ENCODE measurements at regions of chr11 and their contacts with region 1.

Region 1: GRCh38 chr11:95556342-95557163 is 233.0 kb downstream of the FAM76B start:
- DNase-seq: peak; percentile 56
- H3K4me3 Mint-ChIP-seq: peak overlapping the region; percentile 38
- H3K27ac Mint-ChIP-seq: peak overlapping the region; percentile 90
- H3K4me1 Mint-ChIP-seq: peaks cover 27% of the 10 kb centered on the region
- H3K27me3 Mint-ChIP-seq: no peaks in the 10 kb centered on the region

Region 2: DNA sequence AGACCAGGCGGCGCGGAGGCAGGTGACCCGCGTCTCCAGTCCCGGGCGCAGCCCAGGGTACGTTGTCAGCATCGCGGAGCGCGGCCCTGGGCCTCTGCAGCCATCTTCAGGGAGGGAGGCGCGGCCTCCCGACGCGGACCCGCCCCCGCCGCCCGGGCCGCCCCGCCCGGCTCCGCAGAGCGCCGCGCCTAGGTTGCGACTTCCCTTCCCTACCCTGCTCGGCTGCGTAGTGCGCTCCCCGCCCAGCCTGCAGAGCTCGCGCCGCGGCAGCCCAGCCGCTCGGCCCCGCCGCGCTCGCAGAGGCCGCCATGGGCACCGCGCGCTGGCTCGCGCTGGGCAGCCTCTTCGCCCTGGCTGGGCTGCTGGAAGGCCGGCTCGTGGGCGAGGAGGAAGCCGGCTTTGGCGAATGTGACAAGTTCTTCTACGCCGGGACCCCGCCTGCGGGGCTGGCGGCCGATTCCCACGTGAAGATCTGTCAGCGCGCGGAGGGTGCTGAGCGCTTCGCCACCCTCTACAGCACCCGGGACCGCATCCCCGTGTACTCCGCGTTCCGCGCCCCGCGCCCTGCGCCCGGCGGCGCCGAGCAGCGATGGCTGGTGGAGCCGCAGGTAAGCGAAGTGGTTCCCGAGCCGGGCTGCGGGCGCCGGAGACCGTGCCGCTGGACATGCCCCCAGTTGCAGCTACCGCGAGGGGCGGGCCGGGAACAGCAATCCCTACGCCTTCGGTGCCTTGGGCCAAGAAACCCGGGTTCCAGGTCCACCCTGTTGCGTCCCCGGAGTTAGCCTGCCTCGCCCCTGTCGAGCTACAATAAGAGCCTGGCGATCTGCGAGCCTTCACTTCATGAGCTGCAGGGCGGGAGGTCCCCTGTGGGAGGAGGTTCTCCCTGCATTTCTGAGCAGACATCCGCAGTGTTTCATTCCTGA is 466.7 kb before region 1 on chr11 and contains the start of gene ENDOD1:
- CTCF ChIA-PET with region 1: no interaction called
- POLR2A ChIA-PET with region 1: no interaction called
- intact Hi-C with region 1: loop called (anchors 5 kb)
- DNase-seq: peak; percentile 90
- H3K4me3 Mint-ChIP-seq: peak within 1 kb of the TSS; percentile 87
- H3K27ac Mint-ChIP-seq: peak within 1 kb of the TSS; percentile 92
- H3K4me1 Mint-ChIP-seq: peaks cover 68% of the 10 kb centered on the region
- H3K27me3 Mint-ChIP-seq: no peaks in the 10 kb centered on the region
- total RNA-seq, gene ENDOD1: 25.9 TPM

Region 3: DNA sequence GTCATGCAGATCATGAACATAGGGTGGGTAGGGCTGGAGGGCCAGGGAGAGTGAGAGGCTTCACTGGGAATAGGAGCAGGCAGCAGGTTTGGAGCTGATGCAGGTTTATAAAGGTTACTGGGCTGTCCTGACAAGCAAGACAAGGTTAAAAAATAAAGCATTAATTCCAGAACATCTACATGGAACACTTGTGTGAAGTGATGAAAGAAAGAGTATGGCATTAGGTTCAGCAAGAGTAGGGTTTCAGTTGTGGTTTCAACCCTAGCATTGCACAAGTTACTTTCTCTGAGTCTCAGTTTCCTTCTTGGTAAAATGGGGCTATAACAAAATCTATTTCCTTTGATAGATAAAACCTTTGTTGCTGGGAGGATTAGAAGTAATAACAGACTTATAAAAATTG is 210.9 kb before region 1 on chr11:
- CTCF ChIA-PET with region 1: no interaction called
- POLR2A ChIA-PET with region 1: no interaction called
- intact Hi-C with region 1: loop called (anchors 5 kb)
- DNase-seq: no peak
- H3K4me3 Mint-ChIP-seq: no peak overlapping the region
- H3K27ac Mint-ChIP-seq: no peak overlapping the region
- H3K4me1 Mint-ChIP-seq: peaks cover 17% of the 10 kb centered on the region
- H3K27me3 Mint-ChIP-seq: peaks cover 6% of the 10 kb centered on the region

Region 4: GRCh38 chr11:95577716-95578460 is 21.3 kb after region 1 on chr11:
- CTCF ChIA-PET with region 1: interaction called, 4 read pairs
- POLR2A ChIA-PET with region 1: no interaction called
- intact Hi-C with region 1: loop called (anchors 1 kb)
- DNase-seq: no peak
- H3K4me3 Mint-ChIP-seq: no peak overlapping the region
- H3K27ac Mint-ChIP-seq: no peak overlapping the region
- H3K4me1 Mint-ChIP-seq: peaks cover 13% of the 10 kb centered on the region
- H3K27me3 Mint-ChIP-seq: no peaks in the 10 kb centered on the region

Region 5: DNA sequence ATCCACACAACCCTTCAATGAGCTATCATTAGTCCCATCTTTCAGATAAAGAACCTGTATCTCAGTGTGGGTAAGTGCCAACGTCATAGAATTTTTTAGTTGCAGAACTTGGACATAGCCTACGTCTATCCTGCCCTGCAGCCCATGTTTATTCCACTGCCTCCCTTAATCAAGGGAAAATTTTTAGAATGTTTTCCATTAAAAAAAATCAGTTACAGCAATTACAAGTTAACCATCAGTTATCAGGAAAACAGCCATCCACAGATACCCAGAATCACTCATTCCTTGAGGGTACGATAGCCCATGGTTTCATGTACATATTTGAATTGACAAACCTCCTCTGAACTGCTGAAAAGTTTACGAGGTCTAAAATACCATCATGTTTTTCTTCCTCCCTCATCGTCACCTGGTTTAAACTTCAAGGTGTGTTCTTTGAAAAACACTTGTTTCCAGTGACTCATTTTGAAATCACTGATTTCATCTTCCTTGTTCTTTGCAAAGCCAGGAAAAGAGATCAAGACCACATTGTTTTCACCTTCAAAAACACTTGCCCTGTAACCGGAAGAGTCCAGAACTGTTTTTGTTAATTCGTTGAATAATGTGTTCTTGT is 132.1 kb after region 1 on chr11:
- CTCF ChIA-PET with region 1: interaction called, 3 read pairs
- POLR2A ChIA-PET with region 1: interaction called, 5 read pairs
- intact Hi-C with region 1: loop called (anchors 1 kb)
- DNase-seq: no peak
- H3K4me3 Mint-ChIP-seq: no peak overlapping the region
- H3K27ac Mint-ChIP-seq: no peak overlapping the region
- H3K4me1 Mint-ChIP-seq: peaks cover 40% of the 10 kb centered on the region
- H3K27me3 Mint-ChIP-seq: no peaks in the 10 kb centered on the region

Measured in activated CD4-positive, alpha-beta memory T cell treated with anti-CD3 and anti-CD28 coated beads for 36 hours (primary cell).